Vagina (tissue), 2 donors: ENCODE measurements at regions of chr20 and their contacts with region 1.

Region 1: GRCh38 chr20:43159994-43160393 is 29.7 kb downstream of the PTPRT start:
- DNase-seq: no peak
- H3K4me3 ChIP-seq: no peak overlapping the region
- H3K27ac ChIP-seq: no peak overlapping the region
- H3K4me1 ChIP-seq: no peaks in the 10 kb centered on the region
- H3K27me3 ChIP-seq: no peaks in the 10 kb centered on the region
- CTCF ChIP-seq: no peak
- POLR2A ChIP-seq: no peak

Region 2: DNA sequence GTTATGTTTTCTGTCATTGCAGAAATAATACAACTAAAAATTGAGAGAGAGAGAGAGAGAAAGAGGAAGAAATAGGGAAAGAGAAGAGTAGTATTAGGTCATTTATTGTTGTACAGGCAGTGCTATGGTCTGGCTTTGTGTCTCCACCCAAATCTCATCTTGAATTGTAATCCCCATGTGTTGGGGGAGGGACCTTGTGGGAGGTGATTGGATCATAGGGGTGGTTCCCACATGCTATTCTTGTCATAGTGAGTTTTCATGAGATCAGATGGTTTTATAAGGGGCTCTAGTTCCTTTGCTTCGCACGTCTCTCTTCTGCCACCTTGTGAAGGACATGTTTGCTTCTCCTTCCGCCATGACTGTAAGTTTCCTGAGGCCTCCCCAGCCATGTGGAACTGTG is 864.4 kb before region 1 on chr20:
- intact Hi-C with region 1: loop called (anchors 5 kb)
- DNase-seq: no peak
- H3K4me3 ChIP-seq: no peak overlapping the region
- H3K27ac ChIP-seq: no peak overlapping the region
- H3K4me1 ChIP-seq: no peaks in the 10 kb centered on the region
- H3K27me3 ChIP-seq: no peaks in the 10 kb centered on the region
- CTCF ChIP-seq: no peak
- POLR2A ChIP-seq: no peak

Region 3: DNA sequence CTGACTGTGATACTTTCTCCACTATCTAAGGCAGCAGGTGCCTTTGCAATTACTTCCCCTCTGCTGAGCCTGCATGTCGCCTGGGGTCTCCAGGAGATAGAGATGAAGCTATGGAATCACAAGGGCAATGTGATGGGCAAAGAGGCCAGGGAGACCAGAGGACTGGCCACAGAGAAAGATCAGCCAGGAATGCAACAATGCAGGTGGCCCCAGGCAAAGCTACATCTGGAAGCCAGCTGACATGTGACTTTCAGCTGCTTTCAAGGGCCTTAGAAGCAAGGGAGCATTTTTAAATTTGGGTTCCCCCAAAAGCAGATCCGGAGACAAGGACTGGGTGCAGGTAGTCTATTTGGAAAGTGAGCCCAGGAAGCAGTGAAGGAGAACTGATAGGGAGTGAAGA is 189.9 kb after region 1 on chr20:
- intact Hi-C with region 1: no loop called
- DNase-seq: no peak
- H3K4me3 ChIP-seq: no peak overlapping the region
- H3K27ac ChIP-seq: no peak overlapping the region
- H3K4me1 ChIP-seq: no peaks in the 10 kb centered on the region
- H3K27me3 ChIP-seq: no peaks in the 10 kb centered on the region
- CTCF ChIP-seq: no peak
- POLR2A ChIP-seq: no peak